A673 (cell line): ENCODE measurements at regions of chr16 and their contacts with region 1.

Region 1: DNA sequence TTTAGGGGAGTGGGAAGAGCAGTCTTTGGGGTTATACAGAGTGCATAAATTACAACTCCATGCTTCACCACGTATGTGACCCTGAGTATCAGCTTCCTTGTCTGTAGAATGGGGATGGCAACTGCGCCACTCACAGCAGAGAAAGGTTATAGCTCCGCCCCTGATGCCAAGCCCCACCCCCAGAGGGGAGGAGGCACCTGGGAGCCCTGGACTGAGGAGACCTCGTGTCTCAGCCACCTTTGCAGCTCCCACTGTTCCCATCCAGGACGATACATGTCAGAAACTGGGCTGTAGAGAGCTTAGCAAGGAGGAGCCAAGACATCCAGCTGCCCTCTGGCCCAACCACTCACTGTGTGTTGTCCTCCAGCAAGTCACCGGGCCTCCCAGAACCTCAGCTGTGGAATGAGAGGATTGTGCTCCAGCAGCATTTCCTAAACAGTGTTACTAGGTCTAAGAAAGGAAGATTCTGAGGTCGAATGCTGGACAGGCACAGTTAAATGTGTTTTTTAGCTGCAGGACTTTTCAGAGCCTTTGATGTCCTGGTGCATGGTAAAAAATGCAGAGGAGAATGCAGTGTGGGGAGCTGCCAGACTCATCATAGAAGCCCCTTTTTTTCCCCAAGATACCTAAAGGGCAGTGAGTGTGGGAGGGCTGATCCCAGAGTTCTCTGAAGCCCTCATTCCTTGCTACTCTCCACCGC is 49.4 kb downstream of the BEAN1 start:
- DNase-seq: peak; percentile 22
- H3K4me3 ChIP-seq: no peak overlapping the region
- H3K27ac ChIP-seq: no peak overlapping the region
- H3K4me1 ChIP-seq: no peaks in the 10 kb centered on the region
- H3K27me3 ChIP-seq: no peaks in the 10 kb centered on the region
- CTCF ChIP-seq: no peak

Region 2: GRCh38 chr16:66231452-66232160 is 244.9 kb before region 1 on chr16:
- CTCF ChIA-PET with region 1: no interaction called
- POLR2A ChIA-PET with region 1: no interaction called
- intact Hi-C with region 1: no loop called
- DNase-seq: no peak
- H3K4me3 ChIP-seq: no peak overlapping the region
- H3K27ac ChIP-seq: no peak overlapping the region
- H3K4me1 ChIP-seq: peaks cover 16% of the 10 kb centered on the region
- H3K27me3 ChIP-seq: no peaks in the 10 kb centered on the region
- CTCF ChIP-seq: no peak

Region 3: DNA sequence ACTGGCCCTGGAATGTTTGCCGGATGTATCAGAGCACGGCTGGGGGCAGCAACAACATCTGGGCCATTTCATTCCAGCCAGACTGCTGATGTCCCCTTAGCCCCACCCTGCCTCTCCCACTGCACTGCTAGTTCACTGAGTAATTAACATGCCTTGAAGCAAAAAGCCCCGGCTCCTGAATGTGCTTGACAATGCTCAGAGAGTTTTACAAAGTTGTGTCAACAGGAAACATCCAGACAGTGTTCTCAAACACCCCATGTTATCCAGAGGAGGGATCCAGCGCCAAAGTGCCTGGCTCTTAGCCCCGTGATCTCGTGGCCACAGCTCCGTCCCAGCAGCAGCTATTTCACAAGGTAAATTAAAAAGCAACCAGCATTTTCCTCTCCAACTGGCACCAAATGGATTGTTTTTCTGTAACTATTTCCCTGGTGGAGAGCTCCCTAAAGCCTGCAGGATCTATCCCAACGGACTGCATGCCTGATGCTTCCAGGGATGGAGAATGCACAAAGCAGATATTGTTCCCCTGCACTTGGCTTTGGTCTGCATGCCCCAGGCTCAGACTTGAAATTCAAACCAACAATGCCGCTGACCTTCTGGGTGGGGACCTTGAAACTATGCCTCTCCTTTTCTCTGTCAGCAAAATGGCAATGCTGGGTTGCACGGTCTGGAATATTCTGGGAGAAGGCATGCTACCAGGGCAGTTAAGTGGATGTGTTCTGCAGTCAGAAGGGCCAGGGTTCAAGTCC is 225.6 kb before region 1 on chr16:
- CTCF ChIA-PET with region 1: no interaction called
- POLR2A ChIA-PET with region 1: no interaction called
- intact Hi-C with region 1: no loop called
- DNase-seq: no peak
- H3K4me3 ChIP-seq: no peak overlapping the region
- H3K27ac ChIP-seq: no peak overlapping the region
- H3K4me1 ChIP-seq: peaks cover 10% of the 10 kb centered on the region
- H3K27me3 ChIP-seq: no peaks in the 10 kb centered on the region
- CTCF ChIP-seq: no peak

Region 4: GRCh38 chr16:66399930-66400329 is 76.5 kb before region 1 on chr16:
- CTCF ChIA-PET with region 1: no interaction called
- POLR2A ChIA-PET with region 1: no interaction called
- intact Hi-C with region 1: no loop called
- DNase-seq: peak; percentile 92
- H3K4me3 ChIP-seq: no peak overlapping the region
- H3K27ac ChIP-seq: no peak overlapping the region
- H3K4me1 ChIP-seq: peaks cover 17% of the 10 kb centered on the region
- H3K27me3 ChIP-seq: no peaks in the 10 kb centered on the region
- CTCF ChIP-seq: no peak

Region 5: GRCh38 chr16:66414891-66415290 is 61.6 kb before region 1 on chr16:
- CTCF ChIA-PET with region 1: interaction called, 11 read pairs
- POLR2A ChIA-PET with region 1: no interaction called
- intact Hi-C with region 1: no loop called
- DNase-seq: no peak
- H3K4me3 ChIP-seq: no peak overlapping the region
- H3K27ac ChIP-seq: no peak overlapping the region
- H3K4me1 ChIP-seq: no peaks in the 10 kb centered on the region
- H3K27me3 ChIP-seq: no peaks in the 10 kb centered on the region
- CTCF ChIP-seq: no peak